Esophagus squamous epithelium (tissue), 5 donors: ENCODE measurements at regions of chr7 and their contacts with region 1.

Region 1: GRCh38 chr7:74026903-74027551 is 946 bp upstream of the ELN start:
- DNase-seq: no peak
- H3K4me3 ChIP-seq: peak overlapping the region in 3 of 4 donors; percentile 52 to 70 (median 57)
- H3K27ac ChIP-seq: peak overlapping the region; percentile 69 to 93 (median 86)
- H3K4me1 ChIP-seq: peaks cover 23 to 100% (median 71%) of the 10 kb centered on the region in 3 donors
- H3K27me3 ChIP-seq: peaks cover 0 to 86% (median 0%) of the 10 kb centered on the region in 4 donors
- CTCF ChIP-seq: peak; percentile 77 to 96 (median 92)
- POLR2A ChIP-seq: no peak

Region 2: DNA sequence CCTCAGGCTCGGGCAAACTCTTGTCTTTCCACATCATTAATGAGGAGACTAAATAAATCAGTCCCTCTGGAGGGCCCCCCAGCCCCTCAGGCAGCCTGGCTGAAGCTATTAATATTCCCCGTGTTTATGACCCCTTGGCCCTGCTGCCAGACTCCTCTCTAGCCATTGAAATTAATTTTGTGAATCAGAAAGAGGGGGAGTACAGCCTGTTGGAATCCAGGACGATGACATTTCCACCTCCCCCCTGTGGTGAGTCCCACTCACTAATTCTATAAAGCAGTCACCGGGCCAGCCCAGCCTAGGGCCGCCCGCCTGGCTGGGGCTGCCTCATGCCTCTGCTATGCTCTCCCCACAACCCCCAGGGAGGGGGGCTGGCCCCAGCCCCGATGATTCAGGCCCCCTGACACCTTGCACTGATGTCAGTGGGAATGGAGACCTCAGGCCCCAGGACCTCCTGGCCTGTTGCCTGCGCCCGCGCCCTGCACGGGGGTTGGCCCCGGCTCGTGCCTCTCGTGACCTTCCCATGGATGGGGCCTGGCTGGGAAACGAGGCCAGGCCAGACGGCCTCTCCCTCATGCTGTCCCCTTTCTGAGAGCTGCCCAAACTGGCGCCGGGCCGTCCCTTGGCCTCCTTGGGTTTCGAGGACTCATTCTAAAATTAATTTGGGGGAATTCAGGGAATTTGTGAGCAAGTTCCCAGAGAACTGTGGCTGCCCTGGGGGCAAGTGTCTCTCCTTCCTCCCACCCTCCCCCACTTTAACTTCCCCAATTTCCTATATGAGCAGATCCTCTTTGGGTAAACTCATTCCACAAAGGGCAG is 132.1 kb before region 1 on chr7:
- intact Hi-C with region 1: loop called (anchors 10 kb)
- DNase-seq: no peak
- H3K4me3 ChIP-seq: no peak overlapping the region
- H3K27ac ChIP-seq: peak overlapping the region; percentile 13 to 89 (median 68)
- H3K4me1 ChIP-seq: peaks cover 0 to 66% (median 29%) of the 10 kb centered on the region in 3 donors
- H3K27me3 ChIP-seq: peaks cover 0 to 8% (median 0%) of the 10 kb centered on the region in 4 donors
- CTCF ChIP-seq: no peak
- POLR2A ChIP-seq: no peak